Activated T-helper 1 cell treated with anti-CD3 and anti-CD28 coated beads, Interleukin-12 subunit alpha, Interleukin-12 subunit beta, Interleukin-2, Interleukin-4 antibody, amounts not matched to agents 30 ng/mL and 10 ng/mL and 1 ng/mL, durations not matched to agents 14 hours and 24 hours and 36 hours (primary cell): ENCODE measurements at regions of chr11 and their contacts with region 1.

Region 1: GRCh38 chr11:18615628-18616392 is 16.2 kb downstream of the MISFA start:
- DNase-seq: no peak
- H3K4me3 Mint-ChIP-seq: peak overlapping the region; percentile 70
- H3K27ac Mint-ChIP-seq: peak overlapping the region; percentile 87
- H3K4me1 Mint-ChIP-seq: peaks cover 67% of the 10 kb centered on the region
- H3K27me3 Mint-ChIP-seq: no peaks in the 10 kb centered on the region

Region 2: DNA sequence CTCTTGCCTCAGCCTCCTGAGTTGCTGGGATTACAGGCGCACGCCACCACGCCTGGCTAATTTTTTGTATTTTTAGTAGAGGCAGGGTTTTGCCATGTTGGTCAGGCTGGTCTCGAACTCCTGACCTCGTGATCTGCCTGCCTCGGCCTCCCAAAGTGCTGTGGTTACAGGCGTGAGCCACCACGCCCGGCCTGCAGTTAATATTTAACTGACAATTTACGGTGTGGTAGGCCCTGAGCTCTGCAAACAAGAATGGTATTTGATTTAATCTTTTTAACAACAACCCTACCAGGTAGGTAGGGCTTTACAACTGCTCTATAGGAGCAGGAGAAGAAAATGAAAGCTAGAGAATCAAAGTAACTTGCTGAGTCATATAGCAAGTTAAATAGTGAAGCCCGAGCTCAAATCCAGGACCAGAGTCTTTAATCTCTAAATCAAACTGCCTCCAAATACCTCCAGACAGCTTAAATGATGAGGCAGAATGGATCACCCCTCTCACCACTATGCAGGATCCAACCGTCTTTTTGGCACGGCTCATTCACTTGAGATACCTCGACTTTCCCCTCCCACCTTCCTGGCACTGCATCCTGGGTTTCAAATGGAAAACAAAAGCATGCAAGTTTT is 36.7 kb before region 1 on chr11:
- intact Hi-C with region 1: loop called (anchors 5 kb)
- DNase-seq: peak; percentile 21
- H3K4me3 Mint-ChIP-seq: peak overlapping the region; percentile 61
- H3K27ac Mint-ChIP-seq: peak overlapping the region; percentile 80
- H3K4me1 Mint-ChIP-seq: peaks cover 65% of the 10 kb centered on the region
- H3K27me3 Mint-ChIP-seq: no peaks in the 10 kb centered on the region

Region 3: DNA sequence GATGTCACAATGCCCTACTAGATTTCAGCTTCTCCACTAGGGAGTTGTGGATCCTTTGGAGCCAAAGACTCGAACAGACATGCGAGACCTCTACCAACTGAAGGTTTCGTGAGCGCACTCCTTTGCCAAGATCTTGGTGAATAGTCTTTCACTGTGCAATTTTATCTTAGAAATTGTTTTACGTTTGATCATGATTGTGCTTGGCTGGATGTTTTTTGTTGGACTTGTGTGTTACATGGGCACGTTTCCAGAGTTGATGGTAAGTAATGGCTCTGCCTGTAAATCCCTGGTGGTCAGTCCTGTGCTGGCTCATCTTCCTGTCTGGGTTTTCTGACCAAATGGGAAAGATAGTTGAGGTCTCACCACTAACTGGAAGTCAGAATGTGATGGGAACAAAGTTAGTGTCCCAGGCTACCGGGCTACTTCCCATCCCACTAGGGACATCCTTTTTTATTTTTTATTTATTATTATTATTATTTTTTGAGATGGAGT is 16.0 kb before region 1 on chr11 and contains the start of gene MISFA:
- intact Hi-C with region 1: no loop called
- DNase-seq: no peak
- H3K4me3 Mint-ChIP-seq: no peak within 1 kb of the TSS
- H3K27ac Mint-ChIP-seq: no peak within 1 kb of the TSS
- H3K4me1 Mint-ChIP-seq: peaks cover 4% of the 10 kb centered on the region
- H3K27me3 Mint-ChIP-seq: no peaks in the 10 kb centered on the region
- total RNA-seq, gene MISFA: 5.1 and 7.1 TPM in 2 replicates

Region 4: DNA sequence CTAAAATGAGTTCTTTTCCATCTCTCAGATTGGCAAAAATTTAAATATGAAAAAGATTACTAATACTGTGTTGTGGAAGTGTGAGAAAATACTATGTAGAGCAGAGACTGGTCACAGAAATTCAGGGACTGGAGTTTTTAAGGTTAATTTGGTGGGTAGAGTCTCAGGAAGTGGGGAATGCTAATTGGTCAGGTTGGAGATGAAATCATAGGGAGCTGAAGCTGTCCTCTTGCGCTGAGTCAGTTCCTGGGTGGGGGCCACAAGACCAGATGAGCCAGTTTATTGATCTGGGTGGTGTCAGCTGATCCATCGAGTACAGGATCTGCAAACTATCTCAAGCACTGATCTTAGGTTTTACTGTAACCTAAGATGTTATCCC is 53.4 kb after region 1 on chr11:
- intact Hi-C with region 1: loop called (anchors 5 kb)
- DNase-seq: no peak
- H3K4me3 Mint-ChIP-seq: no peak overlapping the region
- H3K27ac Mint-ChIP-seq: no peak overlapping the region
- H3K4me1 Mint-ChIP-seq: peaks cover 31% of the 10 kb centered on the region
- H3K27me3 Mint-ChIP-seq: peaks cover 7% of the 10 kb centered on the region

Region 5: DNA sequence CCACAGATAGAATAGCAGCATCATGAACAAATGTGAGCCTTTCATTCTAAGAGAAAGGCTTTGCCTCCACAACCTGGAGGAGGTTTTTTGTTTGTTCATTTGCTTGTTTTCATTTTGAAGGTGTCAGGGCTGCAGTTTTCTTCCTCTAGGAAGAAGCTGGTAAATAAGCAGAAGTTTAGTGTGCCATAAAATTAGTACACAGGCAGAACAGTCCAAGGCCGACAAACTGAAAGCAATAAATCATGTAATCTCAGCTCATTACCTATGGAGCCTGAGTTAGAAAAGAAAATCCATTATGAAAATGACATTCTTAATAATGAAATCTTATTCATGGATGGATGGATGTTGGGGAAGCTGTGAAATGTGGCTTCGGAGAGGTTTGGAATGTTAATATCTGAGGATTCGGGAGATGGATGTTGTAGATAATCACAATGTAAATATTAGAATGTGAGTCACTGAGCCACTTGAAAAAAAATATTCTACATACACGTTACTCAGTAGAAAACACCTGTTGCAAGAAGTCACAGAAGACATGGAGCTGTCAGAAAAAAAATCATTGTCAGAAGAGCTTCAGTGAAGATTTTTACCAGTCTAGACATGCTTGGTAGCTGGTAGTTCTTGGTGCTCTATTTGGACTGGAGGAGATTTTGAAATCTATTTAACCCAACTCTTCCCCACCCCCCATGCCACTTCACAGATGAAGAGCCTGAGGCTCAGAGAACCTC is 486.1 kb after region 1 on chr11:
- intact Hi-C with region 1: no loop called
- DNase-seq: no peak
- H3K4me3 Mint-ChIP-seq: no peak overlapping the region
- H3K27ac Mint-ChIP-seq: no peak overlapping the region
- H3K4me1 Mint-ChIP-seq: no peaks in the 10 kb centered on the region
- H3K27me3 Mint-ChIP-seq: peaks cover 17% of the 10 kb centered on the region